ENCODE measurements at regions of chr21 and their contacts with region 1.

Region 1: GRCh38 chr21:41167348-41168342 is at the start of gene BACE2:
- DNase-seq: peak; percentile 91
- total RNA-seq, gene BACE2: 20.0 TPM

Region 2: GRCh38 chr21:40902299-40902698 is 265.3 kb before region 1 on chr21:
- intact Hi-C with region 1: no loop called
- DNase-seq: no peak

Region 3: DNA sequence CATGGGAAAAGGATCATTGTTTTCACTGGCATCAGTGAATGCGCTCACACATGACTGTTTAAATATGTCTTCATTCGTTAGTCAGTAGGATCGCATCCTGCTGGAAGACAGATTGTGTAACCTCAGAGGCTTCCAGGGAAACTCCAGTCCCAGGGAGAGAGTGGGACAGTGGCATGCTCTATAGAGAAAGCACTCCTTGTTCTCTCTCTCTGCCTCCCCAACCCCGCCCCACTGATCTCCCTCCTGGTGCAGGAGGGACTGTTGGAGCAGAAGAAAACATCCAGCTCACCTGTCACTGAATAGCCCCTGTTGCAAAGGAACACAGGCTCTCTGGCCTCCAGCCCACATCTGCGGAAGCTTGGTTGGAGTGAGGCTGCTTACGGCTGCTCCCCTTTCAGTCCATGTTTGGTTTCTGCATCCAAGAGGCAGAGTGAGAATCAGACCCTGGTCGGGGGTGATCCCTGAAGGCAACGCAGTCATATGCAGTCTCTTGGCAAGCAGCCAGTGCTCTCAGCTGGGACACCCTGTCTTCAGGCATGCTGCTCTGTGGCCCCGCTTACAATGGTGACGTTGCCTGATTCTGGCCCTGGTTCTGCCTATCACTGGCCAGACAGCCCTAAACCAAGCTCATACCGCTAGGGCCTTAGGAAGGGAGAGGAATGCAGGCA is 39.9 kb after region 1 on chr21:
- intact Hi-C with region 1: loop called (anchors 5 kb)
- DNase-seq: no peak

Measured in cardiac septum (tissue), 1 donor.